Endothelial cell of umbilical vein (primary cell): ENCODE measurements at regions of chr21 and their contacts with region 1.

Region 1: DNA sequence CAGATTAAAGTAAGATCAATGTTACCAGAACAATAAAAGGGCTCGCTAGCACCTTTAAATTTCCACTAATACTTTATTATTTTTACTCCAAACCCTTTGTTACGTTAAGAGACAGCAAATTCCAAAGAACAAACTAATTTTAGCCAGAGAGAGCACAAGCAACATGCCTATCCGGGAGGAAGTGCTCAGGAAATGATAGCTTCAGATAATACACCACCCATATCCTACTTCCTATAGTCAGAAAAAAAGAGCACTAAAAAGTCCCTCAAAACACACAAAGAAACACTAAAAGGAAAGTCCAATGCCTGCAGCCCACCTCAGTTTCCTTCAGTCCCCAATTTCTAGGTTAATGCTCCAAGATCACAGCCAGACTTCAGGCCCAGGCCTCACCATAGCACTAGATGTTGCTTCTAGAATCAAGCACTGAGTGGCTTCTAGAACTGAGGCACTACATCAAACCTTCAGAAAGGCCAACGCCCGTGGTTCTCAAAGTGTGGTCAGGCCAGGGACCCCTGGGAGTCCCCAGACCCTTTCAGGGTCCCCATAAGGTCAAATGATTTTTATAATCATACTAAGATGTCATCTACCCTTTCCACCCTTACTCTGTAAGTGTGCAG is 142.6 kb downstream of the PSMG1 start:
- DNase-seq: peak; percentile 63
- H3K4me3 ChIP-seq: peak overlapping the region in 1 of 3 experiments; percentile 26
- H3K27ac ChIP-seq: peak overlapping the region; percentile 39
- H3K4me1 ChIP-seq: peaks cover 28% of the 10 kb centered on the region
- H3K27me3 ChIP-seq: no peaks in the 10 kb centered on the region
- CTCF ChIP-seq: no peak
- POLR2A ChIP-seq: no peak

Region 2: GRCh38 chr21:37945036-37945435 is 1095.6 kb before region 1 on chr21:
- CTCF ChIA-PET with region 1: no interaction called
- POLR2A ChIA-PET with region 1: no interaction called
- dilution Hi-C with region 1: no loop called
- intact Hi-C with region 1: no loop called
- DNase-seq: no peak
- H3K4me3 ChIP-seq: no peak overlapping the region
- H3K27ac ChIP-seq: no peak overlapping the region
- H3K4me1 ChIP-seq: no peaks in the 10 kb centered on the region
- H3K27me3 ChIP-seq: no peaks in the 10 kb centered on the region
- CTCF ChIP-seq: no peak
- POLR2A ChIP-seq: no peak

Region 3: GRCh38 chr21:38910390-38911024 is 130.1 kb before region 1 on chr21:
- CTCF ChIA-PET with region 1: no interaction called
- POLR2A ChIA-PET with region 1: no interaction called
- dilution Hi-C with region 1: no loop called
- intact Hi-C with region 1: no loop called
- DNase-seq: no peak
- H3K4me3 ChIP-seq: no peak overlapping the region
- H3K27ac ChIP-seq: no peak overlapping the region
- H3K4me1 ChIP-seq: peaks cover 3% of the 10 kb centered on the region
- H3K27me3 ChIP-seq: peaks cover 0 to under 1% of the 10 kb centered on the region in 2 experiments
- CTCF ChIP-seq: no peak
- POLR2A ChIP-seq: no peak

Region 4: GRCh38 chr21:39004634-39005501 is 35.7 kb before region 1 on chr21:
- CTCF ChIA-PET with region 1: interaction called, 5 read pairs
- POLR2A ChIA-PET with region 1: no interaction called
- dilution Hi-C with region 1: no loop called
- intact Hi-C with region 1: loop called (anchors 2 kb)
- DNase-seq: peak; percentile 84
- H3K4me3 ChIP-seq: no peak overlapping the region
- H3K27ac ChIP-seq: peak overlapping the region; percentile 60
- H3K4me1 ChIP-seq: peaks cover 56% of the 10 kb centered on the region
- H3K27me3 ChIP-seq: no peaks in the 10 kb centered on the region
- CTCF ChIP-seq: no peak
- POLR2A ChIP-seq: no peak

Region 5: DNA sequence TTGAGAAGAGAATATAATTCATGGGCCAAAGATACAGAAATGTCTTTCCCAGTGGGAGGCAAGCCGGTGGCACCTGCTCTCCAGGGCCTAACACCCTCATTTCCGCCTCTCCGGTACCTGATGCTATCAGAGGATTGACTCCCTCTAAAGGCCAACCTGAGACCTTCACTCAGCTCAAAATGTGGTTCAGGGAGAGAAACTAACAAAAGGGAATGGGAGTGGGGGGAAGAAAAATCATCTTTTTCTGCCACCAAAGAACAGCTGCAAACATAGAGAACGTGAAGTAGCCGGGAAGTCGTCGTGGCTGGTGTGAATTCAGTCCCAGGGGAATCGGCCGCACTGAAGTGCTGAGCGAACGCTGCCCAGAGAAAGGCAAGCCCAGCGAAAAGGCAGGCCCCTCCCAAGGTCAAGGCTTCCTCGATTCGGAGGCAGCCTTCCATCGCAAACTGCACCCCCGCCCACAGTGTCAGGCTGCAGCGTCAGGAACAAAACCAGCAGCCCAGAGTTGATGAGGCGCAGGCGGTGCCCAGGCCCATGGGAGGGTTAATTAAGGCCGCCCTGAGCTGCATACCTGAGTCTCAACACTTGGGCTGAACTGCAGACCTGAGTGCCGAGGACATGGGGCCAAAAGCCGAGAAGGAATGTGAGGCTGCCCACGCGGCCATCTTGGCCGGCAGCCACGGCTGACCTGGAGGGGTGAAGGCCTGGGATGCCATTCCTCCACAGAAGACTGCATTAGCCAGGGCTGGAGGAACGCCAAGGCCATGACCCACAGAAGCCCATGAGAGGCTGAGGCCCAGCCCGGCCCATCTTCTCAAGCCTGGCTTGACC is 17.5 kb before region 1 on chr21:
- CTCF ChIA-PET with region 1: interaction called, 13 read pairs
- POLR2A ChIA-PET with region 1: no interaction called
- dilution Hi-C with region 1: no loop called
- intact Hi-C with region 1: no loop called
- DNase-seq: no peak
- H3K4me3 ChIP-seq: no peak overlapping the region
- H3K27ac ChIP-seq: no peak overlapping the region
- H3K4me1 ChIP-seq: peaks cover 6% of the 10 kb centered on the region
- H3K27me3 ChIP-seq: no peaks in the 10 kb centered on the region
- CTCF ChIP-seq: peak in 1 of 2 donors; percentile 8
- POLR2A ChIP-seq: no peak

Region 6: DNA sequence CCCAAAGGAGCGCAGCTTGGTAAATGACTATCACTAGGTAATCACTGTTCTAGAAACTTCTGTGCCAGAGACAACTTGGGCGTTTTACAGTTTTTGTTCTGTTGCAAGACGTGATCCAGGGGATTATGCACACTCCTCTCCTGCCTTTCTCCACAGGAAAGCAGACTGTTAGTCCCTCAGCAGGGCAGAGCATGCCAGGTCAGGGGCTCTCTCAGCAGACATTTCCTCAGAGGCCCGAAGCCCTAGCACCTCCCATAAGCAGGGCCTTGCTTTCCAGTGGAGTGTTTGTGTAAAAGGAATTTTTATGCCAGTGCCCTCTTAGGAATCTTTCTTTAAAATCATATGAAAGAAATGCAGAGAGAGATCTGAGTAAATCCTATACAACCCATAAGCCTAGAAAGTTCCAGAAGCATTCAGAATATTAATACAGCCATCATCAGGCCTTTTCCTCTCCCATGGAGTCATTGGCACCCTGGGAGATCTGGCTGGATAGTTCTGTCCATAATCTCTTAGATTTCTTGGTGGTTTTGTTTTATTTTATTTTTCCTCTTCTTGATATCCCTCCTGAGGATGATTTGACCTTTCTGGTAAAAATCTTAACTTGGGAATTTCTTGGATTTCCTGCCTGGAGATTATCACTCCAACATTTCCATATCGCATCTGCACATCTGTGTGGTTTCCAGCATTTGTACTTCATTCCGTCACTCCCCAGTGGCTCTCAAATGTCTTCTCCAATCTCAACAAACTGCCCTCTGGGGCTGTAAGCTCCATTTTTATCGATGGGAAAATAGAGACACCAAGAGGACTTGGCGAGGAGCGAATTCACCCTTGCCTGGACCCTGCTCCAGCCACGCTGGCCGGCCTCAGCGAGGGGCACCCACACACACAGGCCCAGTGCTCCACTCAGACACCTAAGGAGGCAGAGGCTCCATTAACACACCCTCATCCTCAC is 26.5 kb after region 1 on chr21:
- CTCF ChIA-PET with region 1: interaction called, 3 read pairs
- POLR2A ChIA-PET with region 1: no interaction called
- dilution Hi-C with region 1: no loop called
- intact Hi-C with region 1: loop called (anchors 2 kb)
- DNase-seq: peak; percentile 83
- H3K4me3 ChIP-seq: no peak overlapping the region
- H3K27ac ChIP-seq: peak overlapping the region; percentile 6
- H3K4me1 ChIP-seq: peaks cover 26% of the 10 kb centered on the region
- H3K27me3 ChIP-seq: peaks cover 0 to 4% of the 10 kb centered on the region in 2 experiments
- CTCF ChIP-seq: no peak
- POLR2A ChIP-seq: no peak

Region 7: DNA sequence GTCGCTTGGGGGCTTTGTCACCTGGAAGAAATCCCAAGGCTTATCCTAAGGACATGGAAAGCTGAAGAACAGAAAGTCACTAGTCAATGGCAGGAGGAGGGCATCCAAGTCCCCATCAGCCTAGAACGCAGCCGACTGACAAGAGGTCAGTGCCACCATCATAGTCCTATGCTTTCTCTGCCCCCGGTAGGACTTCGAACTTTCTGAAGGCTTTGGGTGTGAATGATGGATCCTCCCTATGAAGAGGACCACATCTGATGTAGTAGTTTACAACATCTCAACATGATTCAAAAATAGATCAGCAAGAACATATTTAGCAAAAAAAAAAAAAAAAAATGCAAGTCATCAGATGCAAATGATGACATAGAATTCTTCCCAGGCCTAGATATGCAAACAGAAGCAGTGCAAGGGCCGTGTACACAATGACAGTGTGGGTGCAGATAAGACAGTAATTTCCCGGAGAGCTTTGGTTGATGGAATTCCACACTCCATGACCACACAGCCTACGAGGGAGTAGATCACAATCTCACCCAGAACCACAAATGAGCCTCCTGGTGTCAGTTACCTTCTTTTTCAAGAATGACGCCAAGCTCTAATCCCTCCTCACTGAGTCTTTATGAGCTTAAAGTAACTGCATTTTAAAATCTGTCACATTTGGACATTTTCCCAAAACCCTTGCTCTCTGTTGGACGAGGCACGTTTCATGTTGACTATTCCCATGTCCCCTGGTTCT is 54.4 kb after region 1 on chr21:
- CTCF ChIA-PET with region 1: no interaction called
- POLR2A ChIA-PET with region 1: no interaction called
- dilution Hi-C with region 1: no loop called
- intact Hi-C with region 1: no loop called
- DNase-seq: peak; percentile 12
- H3K4me3 ChIP-seq: no peak overlapping the region
- H3K27ac ChIP-seq: no peak overlapping the region
- H3K4me1 ChIP-seq: peaks cover 13% of the 10 kb centered on the region
- H3K27me3 ChIP-seq: no peaks in the 10 kb centered on the region
- CTCF ChIP-seq: no peak
- POLR2A ChIP-seq: no peak